A673 (cell line): ENCODE measurements at regions of chr1 and their contacts with region 1.

Region 1: GRCh38 chr1:100752791-100753190 is 33.2 kb downstream of the VCAM1 start:
- DNase-seq: no peak
- H3K4me3 ChIP-seq: no peak overlapping the region
- H3K27ac ChIP-seq: no peak overlapping the region
- H3K4me1 ChIP-seq: no peaks in the 10 kb centered on the region
- H3K27me3 ChIP-seq: no peaks in the 10 kb centered on the region
- CTCF ChIP-seq: no peak

Region 2: DNA sequence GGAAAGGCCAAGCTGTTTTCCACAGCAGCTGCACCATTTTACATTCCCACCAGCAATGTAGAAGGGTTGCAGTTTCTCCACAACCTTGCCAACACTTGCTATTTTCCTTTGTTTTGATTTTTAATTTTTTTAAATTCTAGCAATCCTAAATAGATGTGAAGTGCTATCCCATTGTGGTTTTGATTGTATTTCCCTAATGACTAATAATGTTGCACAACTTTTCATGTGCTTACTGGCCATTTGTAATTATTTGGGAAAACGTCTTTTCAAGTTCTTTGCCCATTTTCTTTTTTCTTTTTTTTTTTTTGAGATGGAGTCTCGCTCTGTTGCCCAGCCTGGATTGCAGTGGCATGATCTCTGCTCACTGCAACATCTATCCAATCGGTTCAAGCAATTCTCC is 20.7 kb after region 1 on chr1:
- CTCF ChIA-PET with region 1: no interaction called
- POLR2A ChIA-PET with region 1: no interaction called
- intact Hi-C with region 1: loop called (anchors 1 kb)
- DNase-seq: no peak
- H3K4me3 ChIP-seq: no peak overlapping the region
- H3K27ac ChIP-seq: no peak overlapping the region
- H3K4me1 ChIP-seq: no peaks in the 10 kb centered on the region
- H3K27me3 ChIP-seq: no peaks in the 10 kb centered on the region
- CTCF ChIP-seq: no peak